Common myeloid progenitor, CD34-positive (primary cell): ENCODE measurements at regions of chr19 and their contacts with region 1.

Region 1: GRCh38 chr19:51226067-51226466 is 1.2 kb downstream of the CD33 start:
- DNase-seq: peak in 2 of 3 donors; percentile 28 to 51
- H3K4me3 ChIP-seq: peak overlapping the region in 6 of 7 experiments; percentile 20 to 79 (median 47)
- H3K27ac ChIP-seq: peak overlapping the region in 1 of 2 experiments; percentile 51
- H3K4me1 ChIP-seq: peaks cover 15 to 59% (median 44%) of the 10 kb centered on the region in 4 experiments
- H3K27me3 ChIP-seq: no peaks in the 10 kb centered on the region

Region 2: GRCh38 chr19:51240866-51241265 is 14.8 kb after region 1 on chr19:
- CTCF ChIA-PET with region 1: interaction called, 13 read pairs
- POLR2A ChIA-PET with region 1: interaction called, 3 read pairs
- DNase-seq: no peak
- H3K4me3 ChIP-seq: no peak overlapping the region
- H3K27ac ChIP-seq: no peak overlapping the region
- H3K4me1 ChIP-seq: peaks cover 8 to 46% (median 41%) of the 10 kb centered on the region in 4 experiments
- H3K27me3 ChIP-seq: no peaks in the 10 kb centered on the region